T-cell (primary cell): ENCODE measurements at regions of chr17 and their contacts with region 1.

Region 1: GRCh38 chr17:59695945-59696692 is 11.1 kb downstream of the PTRH2 start:
- DNase-seq: no peak
- ATAC-seq: no peak
- H3K4me3 ChIP-seq: no peak overlapping the region
- H3K4me3 Mint-ChIP-seq: no peak overlapping the region
- H3K27ac ChIP-seq: no peak overlapping the region
- H3K27ac Mint-ChIP-seq: peak overlapping the region; percentile 26 to 49
- H3K4me1 ChIP-seq: peaks cover 2% of the 10 kb centered on the region in 2 experiments
- H3K4me1 Mint-ChIP-seq: peaks cover 37 to 48% (median 42%) of the 10 kb centered on the region in 3 donors
- H3K27me3 ChIP-seq: no peaks in the 10 kb centered on the region
- H3K27me3 Mint-ChIP-seq: no peaks in the 10 kb centered on the region

Region 2: DNA sequence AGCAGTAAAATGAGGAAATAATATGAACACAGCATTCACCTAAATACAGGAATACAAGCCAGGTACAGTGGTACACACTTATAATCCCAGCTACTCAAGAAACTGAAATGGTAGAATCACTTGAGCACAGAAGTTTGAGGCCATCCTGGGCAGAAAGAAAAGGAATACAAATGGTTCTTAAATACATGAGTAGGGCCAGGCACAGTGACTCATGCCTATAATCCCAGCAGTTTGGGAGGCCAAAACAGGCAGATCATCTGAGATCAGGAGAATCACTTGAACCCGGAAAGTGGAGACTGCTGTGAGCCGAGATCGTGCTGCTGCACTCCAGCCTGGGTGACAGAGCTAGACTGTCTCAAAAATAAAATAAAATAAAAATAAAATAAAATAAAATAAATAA is 509.3 kb before region 1 on chr17:
- CTCF ChIA-PET with region 1: no interaction called
- POLR2A ChIA-PET with region 1: interaction called in 1 of 2 experiments, 11 read pairs
- DNase-seq: no peak
- ATAC-seq: no peak
- H3K4me3 ChIP-seq: no peak overlapping the region
- H3K4me3 Mint-ChIP-seq: no peak overlapping the region
- H3K27ac ChIP-seq: no peak overlapping the region
- H3K27ac Mint-ChIP-seq: no peak overlapping the region
- H3K4me1 ChIP-seq: no peaks in the 10 kb centered on the region
- H3K4me1 Mint-ChIP-seq: no peaks in the 10 kb centered on the region
- H3K27me3 ChIP-seq: no peaks in the 10 kb centered on the region
- H3K27me3 Mint-ChIP-seq: no peaks in the 10 kb centered on the region

Region 3: GRCh38 chr17:59680314-59680713 is 15.8 kb before region 1 on chr17:
- CTCF ChIA-PET with region 1: no interaction called
- POLR2A ChIA-PET with region 1: no interaction called
- DNase-seq: no peak
- ATAC-seq: no peak
- H3K4me3 ChIP-seq: no peak overlapping the region
- H3K4me3 Mint-ChIP-seq: no peak overlapping the region
- H3K27ac ChIP-seq: no peak overlapping the region
- H3K27ac Mint-ChIP-seq: no peak overlapping the region
- H3K4me1 ChIP-seq: no peaks in the 10 kb centered on the region
- H3K4me1 Mint-ChIP-seq: no peaks in the 10 kb centered on the region
- H3K27me3 ChIP-seq: no peaks in the 10 kb centered on the region
- H3K27me3 Mint-ChIP-seq: no peaks in the 10 kb centered on the region